ENCODE measurements at regions of chr1 and their contacts with region 1.

Region 1: DNA sequence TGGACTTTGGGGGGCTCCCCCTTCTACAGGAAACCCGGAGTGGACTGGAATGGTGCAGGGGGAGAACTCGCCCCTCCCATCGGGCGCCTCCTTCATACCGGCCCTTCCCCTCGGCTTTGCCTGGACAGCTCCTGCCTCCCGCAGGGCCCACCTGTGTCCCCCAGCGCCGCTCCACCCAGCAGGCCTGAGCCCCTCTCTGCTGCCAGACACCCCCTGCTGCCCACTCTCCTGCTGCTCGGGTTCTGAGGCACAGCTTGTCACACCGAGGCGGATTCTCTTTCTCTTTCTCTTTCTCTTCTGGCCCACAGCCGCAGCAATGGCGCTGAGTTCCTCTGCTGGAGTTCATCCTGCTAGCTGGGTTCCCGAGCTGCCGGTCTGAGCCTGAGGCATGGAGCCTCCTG is at the start of gene TNFRSF14:
- DNase-seq: peak; percentile 87
- H3K4me3 ChIP-seq: peak within 1 kb of the TSS; percentile 57 to 68 (median 64)
- H3K27ac ChIP-seq: peak within 1 kb of the TSS; percentile 83 to 91 (median 89)
- H3K4me1 ChIP-seq: peaks cover 0 to 35% (median 34%) of the 10 kb centered on the region in 4 donors
- H3K27me3 ChIP-seq: peaks cover 0 to 5% (median 0%) of the 10 kb centered on the region in 3 donors
- CTCF ChIP-seq: peak in 1 of 4 experiments; percentile 18
- EP300 ChIP-seq: no peak
- POLR2A ChIP-seq: peak in 1 of 2 donors; percentile 26
- total RNA-seq, gene TNFRSF14: 37.5 to 73.4 (median 60.4) TPM

Region 2: DNA sequence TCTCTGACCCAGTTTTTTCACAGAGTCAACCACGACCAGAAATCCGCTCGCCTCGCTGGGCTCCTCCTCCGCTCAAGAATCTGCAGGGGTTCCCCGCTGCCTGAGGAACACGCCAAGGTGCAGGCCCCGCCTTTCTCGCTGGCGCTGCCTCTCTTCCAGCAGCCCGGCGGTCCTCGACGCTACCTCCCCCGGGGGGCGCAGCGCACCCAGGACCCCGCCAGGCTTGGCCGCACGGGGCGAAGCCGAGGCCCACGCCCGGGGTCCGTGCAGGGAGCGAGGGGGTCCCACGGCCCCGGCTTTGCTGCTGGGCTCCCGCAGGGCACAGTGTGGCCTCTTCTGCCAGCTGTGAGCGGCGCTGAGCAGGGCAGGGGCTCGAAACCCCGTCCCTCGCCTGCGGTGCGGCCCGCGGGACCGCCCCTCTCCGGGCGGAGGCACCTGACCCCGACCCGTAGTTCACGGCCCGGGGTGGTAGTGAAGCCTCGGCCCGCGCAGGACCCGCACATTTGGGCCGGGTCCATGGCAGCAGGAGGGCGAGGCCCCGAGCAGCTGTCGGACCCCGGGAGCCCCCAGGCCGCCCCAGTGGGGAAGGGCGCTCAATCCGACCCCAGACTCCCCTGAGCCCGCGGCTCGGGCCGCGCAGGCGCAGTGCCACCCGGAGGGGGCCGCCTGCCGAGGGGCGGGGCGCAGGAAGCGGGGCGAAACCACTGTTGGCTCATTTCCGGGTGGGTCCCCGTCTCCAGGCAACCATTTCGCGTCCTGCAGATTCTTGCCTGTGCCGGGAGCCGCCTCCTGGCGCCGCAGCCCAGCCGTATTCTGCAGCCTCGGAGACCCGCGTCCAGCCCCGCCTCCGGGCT is 86.5 kb after region 1 on chr1:
- intact Hi-C with region 1: loop called (anchors 10 kb)
- DNase-seq: peak; percentile 96
- H3K4me3 ChIP-seq: peak overlapping the region; percentile 67 to 95 (median 88)
- H3K27ac ChIP-seq: peak overlapping the region; percentile 81 to 84 (median 82)
- H3K4me1 ChIP-seq: peaks cover 0 to 26% (median 21%) of the 10 kb centered on the region in 4 donors
- H3K27me3 ChIP-seq: peaks cover 0 to 2% (median 0%) of the 10 kb centered on the region in 3 donors
- CTCF ChIP-seq: no peak
- EP300 ChIP-seq: no peak
- POLR2A ChIP-seq: peak; percentile 63 to 67

Measured in sigmoid colon (tissue), 7 donors.